GM23248 (cell line): ENCODE measurements at regions of chr12 and their contacts with region 1.

Region 1: GRCh38 chr12:2583091-2583497 is 211.7 kb upstream of the FKBP4 start:
- DNase-seq: peak; percentile 80
- H3K4me3 ChIP-seq: peak overlapping the region; percentile 43; the same call in 1 of the 2 replicates
- H3K27ac ChIP-seq: no peak overlapping the region
- H3K4me1 ChIP-seq: no peaks in the 10 kb centered on the region
- H3K27me3 ChIP-seq: no peaks in the 10 kb centered on the region

Region 2: GRCh38 chr12:1661553-1662335 is 921.4 kb before region 1 on chr12:
- in situ Hi-C with region 1: loop called (anchors 25 kb)
- DNase-seq: peak; percentile 98
- H3K4me3 ChIP-seq: peak overlapping the region; percentile 27; the same call in 1 of the 2 replicates
- H3K27ac ChIP-seq: peak overlapping the region; percentile 33; the same call in 1 of the 2 replicates
- H3K4me1 ChIP-seq: 0 out of 2 replicates have a peak, but pooled peaks cover 5% of the 10 kb centered on the region
- H3K27me3 ChIP-seq: no peaks in the 10 kb centered on the region

Region 3: GRCh38 chr12:1804545-1805332 is 778.4 kb before region 1 on chr12:
- in situ Hi-C with region 1: loop called (anchors 25 kb)
- DNase-seq: peak; percentile 93
- H3K4me3 ChIP-seq: no peak overlapping the region
- H3K27ac ChIP-seq: no peak overlapping the region
- H3K4me1 ChIP-seq: peaks cover 6% of the 10 kb centered on the region; the same call in 1 of the 2 replicates
- H3K27me3 ChIP-seq: no peaks in the 10 kb centered on the region

Region 4: DNA sequence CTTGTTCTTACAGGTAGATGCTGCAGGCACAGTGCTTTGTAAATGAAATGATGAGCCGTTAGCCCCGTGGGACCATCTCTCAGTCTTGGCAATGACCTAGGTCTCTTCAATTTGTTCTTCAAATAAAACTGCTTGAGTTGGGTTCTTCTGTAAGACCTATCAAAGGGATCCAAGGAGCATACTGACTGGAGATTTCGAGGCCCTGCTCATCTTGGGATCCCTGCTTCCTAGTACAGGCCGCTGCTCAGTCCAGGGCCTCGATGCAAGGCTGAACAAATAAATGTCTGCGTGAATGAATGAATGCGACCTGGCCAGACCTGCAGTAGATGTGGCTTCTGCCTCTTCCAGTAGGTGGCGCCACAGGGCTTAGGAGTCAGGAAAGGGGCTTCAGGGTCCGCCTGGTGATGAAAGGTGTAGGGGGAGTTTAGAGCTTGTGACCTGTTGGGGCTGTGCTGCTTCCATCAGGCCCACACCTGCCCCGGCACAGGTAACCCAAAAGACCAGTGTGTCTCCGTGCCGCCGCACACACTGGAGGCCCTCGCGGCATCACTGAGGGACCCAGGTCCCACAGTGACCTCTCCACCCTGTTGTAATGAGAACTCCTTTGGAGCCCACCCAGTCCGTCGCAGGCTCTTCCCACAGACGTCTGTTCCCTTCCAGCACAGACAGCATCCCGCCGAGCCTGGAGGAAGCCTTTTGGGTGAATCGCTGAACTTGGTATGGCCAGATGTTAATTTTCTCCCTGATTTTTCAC is 525.9 kb before region 1 on chr12:
- in situ Hi-C with region 1: loop called (anchors 25 kb)
- DNase-seq: peak; percentile 64
- H3K4me3 ChIP-seq: no peak overlapping the region
- H3K27ac ChIP-seq: no peak overlapping the region
- H3K4me1 ChIP-seq: peaks cover 12% of the 10 kb centered on the region
- H3K27me3 ChIP-seq: no peaks in the 10 kb centered on the region